ENCODE measurements at regions of chr20 and their contacts with region 1.

Region 1: GRCh38 chr20:49534255-49534712 is 33.7 kb downstream of the PTGIS start:
- DNase-seq: peak in 1 of 2 donors; percentile 35
- H3K4me3 ChIP-seq: no peak overlapping the region
- CTCF ChIP-seq: peak in 1 of 3 donors; percentile 55
- POLR2A ChIP-seq: no peak

Region 2: DNA sequence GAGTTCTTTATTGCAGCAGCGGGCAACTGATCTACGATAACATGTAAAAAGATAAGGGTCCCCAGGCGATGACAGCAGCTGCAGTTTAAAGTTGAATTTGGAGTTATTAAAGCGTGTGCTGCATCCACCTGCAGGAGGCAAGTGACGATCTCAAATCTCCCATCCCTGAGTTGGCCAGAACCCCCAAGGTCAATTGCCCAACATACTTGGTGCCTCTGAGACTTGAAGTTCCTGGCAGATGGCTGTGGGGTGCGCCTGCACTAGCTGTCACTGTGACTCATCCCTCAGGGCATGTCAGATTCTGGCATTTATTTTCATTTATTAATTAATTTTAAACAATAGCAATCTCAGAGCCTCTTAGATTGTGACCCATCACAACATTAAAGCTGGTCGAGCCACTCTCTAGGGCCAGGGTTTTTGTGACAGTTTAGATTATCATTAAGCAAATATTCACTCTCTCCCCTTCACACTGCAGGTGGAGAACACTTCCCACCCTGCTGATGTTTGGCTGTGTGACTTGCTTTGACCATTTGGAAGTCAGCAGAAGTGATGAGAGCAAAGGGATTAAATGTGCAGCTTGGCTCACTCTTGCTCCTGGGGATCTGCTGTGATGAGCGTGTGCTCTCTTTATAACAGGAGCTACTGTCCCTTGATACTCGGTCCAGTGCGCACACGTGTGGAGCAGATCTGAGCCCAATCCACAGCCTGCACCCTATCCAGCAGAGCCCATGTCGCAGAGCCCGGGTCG is 1458.4 kb before region 1 on chr20:
- intact Hi-C with region 1: no loop called
- DNase-seq: no peak
- H3K4me3 ChIP-seq: no peak overlapping the region
- CTCF ChIP-seq: no peak
- POLR2A ChIP-seq: no peak

Region 3: DNA sequence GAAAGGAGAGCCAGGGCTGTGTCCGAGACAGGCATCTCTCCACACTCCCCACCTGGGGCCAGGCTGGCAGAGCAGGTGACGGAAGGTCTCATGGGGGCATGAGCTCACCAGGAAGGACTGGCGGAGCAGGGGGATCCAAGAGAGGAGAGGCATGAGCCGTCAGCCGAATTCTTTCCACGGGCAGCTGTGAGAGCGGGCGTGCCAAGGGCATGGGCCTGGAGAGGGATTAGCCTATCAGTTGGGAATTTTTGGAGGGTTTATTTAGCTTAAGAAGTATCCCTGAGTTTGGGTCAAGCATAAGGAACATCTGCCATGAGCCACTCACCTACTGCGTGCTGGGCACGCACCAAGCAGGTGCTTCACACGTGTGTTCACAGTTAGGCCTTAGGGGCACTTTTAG is 196.2 kb before region 1 on chr20:
- intact Hi-C with region 1: loop called (anchors 5 kb)
- DNase-seq: no peak
- H3K4me3 ChIP-seq: no peak overlapping the region
- CTCF ChIP-seq: no peak
- POLR2A ChIP-seq: no peak

Region 4: GRCh38 chr20:49936153-49937027 is 402.1 kb after region 1 on chr20 and contains the start of gene RNF114:
- intact Hi-C with region 1: no loop called
- DNase-seq: peak; percentile 90 to 98
- H3K4me3 ChIP-seq: peak within 1 kb of the TSS; percentile 75
- CTCF ChIP-seq: no peak
- POLR2A ChIP-seq: peak in 1 of 2 donors; percentile 91
- total RNA-seq, gene RNF114: 48.7 to 166 (median 103) TPM

Measured in lower leg skin (tissue), 4 donors.